Activated CD4-positive, alpha-beta T cell treated with anti-CD3 and anti-CD28 coated beads for 36 hours (primary cell): ENCODE measurements at regions of chr12 and their contacts with region 1.

Region 1: GRCh38 chr12:122974274-122974891 is 661 bp upstream of the OGFOD2 start:
- DNase-seq: peak; percentile 99
- ATAC-seq: peak; percentile 86
- H3K4me3 Mint-ChIP-seq: peak overlapping the region; percentile 95
- H3K27ac Mint-ChIP-seq: peak overlapping the region; percentile 100
- H3K4me1 Mint-ChIP-seq: peaks cover 21% of the 10 kb centered on the region
- H3K27me3 Mint-ChIP-seq: no peaks in the 10 kb centered on the region

Region 2: GRCh38 chr12:122834104-122834920 is 140.1 kb before region 1 on chr12:
- CTCF ChIA-PET with region 1: no interaction called
- POLR2A ChIA-PET with region 1: no interaction called
- intact Hi-C with region 1: loop called in 1 of 2 experiments (anchors 1 kb)
- DNase-seq: peak; percentile 48
- ATAC-seq: peak; percentile 8
- H3K4me3 Mint-ChIP-seq: peak overlapping the region; percentile 75
- H3K27ac Mint-ChIP-seq: peak overlapping the region; percentile 74
- H3K4me1 Mint-ChIP-seq: peaks cover 31% of the 10 kb centered on the region
- H3K27me3 Mint-ChIP-seq: peaks cover 3% of the 10 kb centered on the region

Region 3: DNA sequence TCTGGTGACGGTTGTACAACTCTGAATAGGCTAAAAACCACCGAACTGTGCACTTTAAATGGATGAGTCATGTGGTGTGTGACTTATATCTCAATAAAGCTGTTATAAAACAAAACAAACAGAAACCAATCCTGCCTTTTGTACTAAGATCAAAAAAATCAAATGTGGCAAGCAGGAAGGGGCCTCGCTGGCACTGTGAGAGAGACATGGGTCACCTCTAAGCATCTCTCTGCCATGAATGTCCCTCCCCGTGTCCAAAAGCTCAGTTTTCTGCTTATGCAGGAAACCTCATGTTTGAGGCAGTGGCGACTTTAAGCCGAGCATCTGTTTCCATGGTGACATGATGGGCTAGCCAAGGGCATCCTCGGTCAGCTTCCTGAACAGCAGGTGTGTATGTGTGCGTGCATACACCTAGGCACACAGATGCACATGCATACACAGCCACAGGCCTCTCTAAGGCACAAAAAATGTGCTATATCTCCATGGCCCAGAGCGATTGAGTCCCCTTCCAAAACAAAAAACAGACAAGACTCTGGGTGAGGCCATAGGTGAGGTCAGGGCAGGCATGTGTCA is 50.5 kb after region 1 on chr12:
- CTCF ChIA-PET with region 1: interaction called, 4 read pairs
- POLR2A ChIA-PET with region 1: no interaction called
- intact Hi-C with region 1: loop called in 1 of 2 experiments (anchors 2 kb)
- DNase-seq: peak; percentile 66
- ATAC-seq: peak; percentile 94
- H3K4me3 Mint-ChIP-seq: no peak overlapping the region
- H3K27ac Mint-ChIP-seq: peak overlapping the region; percentile 81
- H3K4me1 Mint-ChIP-seq: peaks cover 31% of the 10 kb centered on the region
- H3K27me3 Mint-ChIP-seq: no peaks in the 10 kb centered on the region

Region 4: GRCh38 chr12:123601602-123602489 is 627.5 kb after region 1 on chr12 and contains the start of gene DDX55:
- CTCF ChIA-PET with region 1: no interaction called
- POLR2A ChIA-PET with region 1: interaction called, 7 read pairs
- intact Hi-C with region 1: loop called in 1 of 2 experiments (anchors 1 kb)
- DNase-seq: peak; percentile 93
- ATAC-seq: peak; percentile 95
- H3K4me3 Mint-ChIP-seq: peak within 1 kb of the TSS; percentile 85
- H3K27ac Mint-ChIP-seq: peak within 1 kb of the TSS; percentile 92
- H3K4me1 Mint-ChIP-seq: peaks cover 36% of the 10 kb centered on the region
- H3K27me3 Mint-ChIP-seq: no peaks in the 10 kb centered on the region
- total RNA-seq, gene DDX55: 44.3 to 49.4 TPM